Common myeloid progenitor, CD34-positive (primary cell): ENCODE measurements at regions of chr17 and their contacts with region 1.

Region 1: GRCh38 chr17:75799398-75799797 is 14.8 kb downstream of the UNK start:
- DNase-seq: no peak
- H3K4me3 ChIP-seq: no peak overlapping the region
- H3K27ac ChIP-seq: no peak overlapping the region
- H3K4me1 ChIP-seq: peaks cover 0 to 7% (median 0%) of the 10 kb centered on the region in 4 experiments
- H3K27me3 ChIP-seq: no peaks in the 10 kb centered on the region

Region 2: GRCh38 chr17:75679706-75680442 is 119.5 kb before region 1 on chr17:
- CTCF ChIA-PET with region 1: no interaction called
- POLR2A ChIA-PET with region 1: no interaction called
- DNase-seq: no peak
- H3K4me3 ChIP-seq: no peak overlapping the region
- H3K27ac ChIP-seq: no peak overlapping the region
- H3K4me1 ChIP-seq: peaks cover 0 to 2% (median 0%) of the 10 kb centered on the region in 4 experiments
- H3K27me3 ChIP-seq: no peaks in the 10 kb centered on the region

Region 3: DNA sequence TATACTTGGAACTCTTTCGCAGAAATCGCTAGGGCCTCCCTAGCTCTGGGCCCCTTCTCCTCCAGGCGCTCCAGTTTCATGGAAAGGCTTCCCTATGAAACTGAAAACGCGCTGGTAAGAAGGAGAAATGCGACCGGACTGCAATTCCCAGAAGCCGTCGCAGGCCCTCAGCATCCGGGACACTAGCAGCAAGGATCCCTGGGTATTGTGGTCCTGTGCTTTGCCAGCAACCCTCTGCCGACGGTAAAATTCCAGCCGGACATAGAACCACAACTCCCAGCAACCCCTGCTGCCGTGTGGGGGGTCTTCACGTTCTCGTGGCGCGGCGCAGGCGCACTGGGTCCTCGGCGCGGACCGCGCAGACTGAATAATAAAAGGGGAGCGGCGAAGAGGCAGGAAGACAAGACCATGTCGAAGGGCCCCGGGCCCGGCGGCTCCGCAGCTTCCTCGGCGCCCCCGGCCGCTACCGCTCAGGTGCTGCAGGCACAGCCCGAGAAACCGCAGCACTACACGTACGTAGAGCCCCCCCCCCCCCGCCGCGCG is 14.9 kb before region 1 on chr17 and contains the start of gene UNK:
- CTCF ChIA-PET with region 1: interaction called, 14 read pairs
- POLR2A ChIA-PET with region 1: interaction called, 3 read pairs
- DNase-seq: peak; percentile 99
- H3K4me3 ChIP-seq: peak within 1 kb of the TSS; percentile 67 to 91 (median 81)
- H3K27ac ChIP-seq: peak within 1 kb of the TSS; percentile 98 to 99
- H3K4me1 ChIP-seq: peaks cover 30 to 52% (median 38%) of the 10 kb centered on the region in 4 experiments
- H3K27me3 ChIP-seq: no peaks in the 10 kb centered on the region